Breast epithelium (tissue), 4 donors: ENCODE measurements at regions of chr17 and their contacts with region 1.

Region 1: DNA sequence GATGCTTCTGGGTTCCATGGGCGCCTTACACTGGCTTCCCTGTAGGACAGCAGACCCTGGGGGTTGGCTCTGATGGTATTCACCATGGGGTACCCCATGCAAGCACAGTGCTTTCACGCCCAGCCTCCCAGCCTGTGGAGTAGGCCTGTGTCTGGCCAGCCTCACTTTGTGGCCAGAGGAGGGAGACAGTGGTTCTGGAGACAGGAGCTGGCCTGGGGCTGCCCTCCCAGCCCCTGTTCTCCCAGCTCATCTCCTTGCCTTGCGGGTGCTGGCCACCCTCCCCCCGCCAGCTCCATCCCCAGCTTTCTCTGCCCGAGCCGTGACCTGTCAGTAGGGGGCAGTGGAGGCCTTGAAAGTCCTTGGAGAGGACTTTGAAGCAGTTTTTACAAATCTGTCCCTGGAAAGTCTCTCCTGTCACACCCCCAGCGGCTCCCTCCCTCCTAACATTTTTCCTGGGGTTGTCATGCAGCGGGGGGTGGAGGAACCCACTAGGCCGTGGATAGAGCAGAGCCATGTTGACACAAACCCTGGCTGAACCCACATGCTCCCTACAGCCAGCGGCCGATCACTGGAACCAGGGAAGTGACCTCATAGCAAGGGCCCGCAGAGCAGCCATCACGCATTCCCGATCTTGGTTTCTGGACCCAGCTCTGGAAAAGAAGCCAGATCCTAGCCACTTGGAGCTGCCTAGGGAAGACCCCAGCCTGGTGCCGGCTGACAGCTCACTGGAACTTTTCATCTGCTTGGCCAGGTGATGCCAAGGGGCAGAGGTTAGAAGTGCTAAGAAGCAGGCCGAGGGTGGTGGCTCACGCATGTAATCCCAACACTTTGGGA is 289.4 kb downstream of the SEC14L1 start:
- DNase-seq: peak; percentile 79 to 87
- H3K4me3 ChIP-seq: peak overlapping the region in 1 of 3 donors; percentile 30
- H3K27ac ChIP-seq: peak overlapping the region; percentile 86 to 94
- H3K4me1 ChIP-seq: peaks cover 46 to 59% of the 10 kb centered on the region in 2 donors
- H3K27me3 ChIP-seq: no peaks in the 10 kb centered on the region
- CTCF ChIP-seq: peak; percentile 73 to 86 (median 79)
- POLR2A ChIP-seq: no peak

Region 2: GRCh38 chr17:77319211-77320043 is 110.7 kb before region 1 on chr17:
- intact Hi-C with region 1: loop called (anchors 10 kb)
- DNase-seq: peak; percentile 92 to 94
- H3K4me3 ChIP-seq: peak overlapping the region; percentile 53 to 79 (median 57)
- H3K27ac ChIP-seq: peak overlapping the region; percentile 99 to 100
- H3K4me1 ChIP-seq: peaks cover 38 to 40% of the 10 kb centered on the region in 2 donors
- H3K27me3 ChIP-seq: no peaks in the 10 kb centered on the region
- CTCF ChIP-seq: peak in 1 of 3 donors; percentile 10
- POLR2A ChIP-seq: peak; percentile 62